ENCODE measurements at regions of chr12 and their contacts with region 1.

Region 1: DNA sequence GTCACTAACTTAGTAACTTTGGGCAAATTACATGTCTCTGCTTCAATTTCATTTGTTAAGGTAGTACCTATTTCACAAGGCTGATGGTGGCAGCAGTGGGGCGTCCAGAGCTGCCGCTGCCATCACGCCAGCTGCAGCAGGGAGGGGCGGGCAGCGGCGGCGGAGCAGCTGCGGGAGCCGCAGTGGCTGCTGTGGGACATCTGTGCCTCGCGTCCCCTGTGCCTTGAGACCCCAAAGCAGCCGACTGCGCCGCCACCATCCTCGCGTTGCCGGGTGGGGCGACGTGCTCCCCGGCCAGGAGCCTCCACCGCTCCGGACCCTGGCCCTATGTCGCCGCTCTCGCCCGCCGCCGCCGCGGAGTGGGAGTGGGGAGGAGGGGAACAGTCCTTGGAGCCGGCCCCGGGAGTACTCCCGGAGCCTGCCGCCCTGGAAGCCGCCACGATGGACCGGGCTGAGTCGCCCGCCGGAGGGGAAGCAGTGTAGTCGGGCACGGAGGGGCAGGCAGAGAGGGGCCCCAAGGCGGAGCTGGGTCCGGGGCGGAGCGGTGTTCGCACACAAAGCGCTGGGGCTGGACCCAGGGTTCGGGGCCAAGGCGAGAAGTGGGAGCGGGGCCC is 51.4 kb downstream of the A2M start:
- DNase-seq: peak; percentile 54 to 96 (median 74)

Region 2: GRCh38 chr12:8065991-8066594 is 998.2 kb before region 1 on chr12 and contains the start of gene C3AR1:
- intact Hi-C with region 1: no loop called
- DNase-seq: no peak

Region 3: DNA sequence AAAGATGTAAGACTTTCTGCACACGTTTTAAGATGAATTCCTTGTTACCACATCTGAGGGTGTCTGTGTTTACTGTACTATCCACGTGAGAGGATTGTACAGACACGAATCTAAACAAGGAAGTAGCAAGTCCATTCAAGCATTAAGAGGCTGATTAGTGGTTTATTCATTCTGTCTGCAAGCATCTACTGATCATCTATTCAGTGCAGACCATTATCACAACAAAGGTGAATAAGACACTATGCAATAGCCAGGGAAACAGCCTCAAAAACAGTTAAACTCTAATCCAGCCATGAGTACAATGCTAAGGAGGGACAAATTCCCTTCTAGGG is 255.5 kb after region 1 on chr12:
- intact Hi-C with region 1: loop called (anchors 5 kb)
- DNase-seq: no peak